CD4-positive, alpha-beta memory T cell (primary cell): ENCODE measurements at regions of chr17 and their contacts with region 1.

Region 1: DNA sequence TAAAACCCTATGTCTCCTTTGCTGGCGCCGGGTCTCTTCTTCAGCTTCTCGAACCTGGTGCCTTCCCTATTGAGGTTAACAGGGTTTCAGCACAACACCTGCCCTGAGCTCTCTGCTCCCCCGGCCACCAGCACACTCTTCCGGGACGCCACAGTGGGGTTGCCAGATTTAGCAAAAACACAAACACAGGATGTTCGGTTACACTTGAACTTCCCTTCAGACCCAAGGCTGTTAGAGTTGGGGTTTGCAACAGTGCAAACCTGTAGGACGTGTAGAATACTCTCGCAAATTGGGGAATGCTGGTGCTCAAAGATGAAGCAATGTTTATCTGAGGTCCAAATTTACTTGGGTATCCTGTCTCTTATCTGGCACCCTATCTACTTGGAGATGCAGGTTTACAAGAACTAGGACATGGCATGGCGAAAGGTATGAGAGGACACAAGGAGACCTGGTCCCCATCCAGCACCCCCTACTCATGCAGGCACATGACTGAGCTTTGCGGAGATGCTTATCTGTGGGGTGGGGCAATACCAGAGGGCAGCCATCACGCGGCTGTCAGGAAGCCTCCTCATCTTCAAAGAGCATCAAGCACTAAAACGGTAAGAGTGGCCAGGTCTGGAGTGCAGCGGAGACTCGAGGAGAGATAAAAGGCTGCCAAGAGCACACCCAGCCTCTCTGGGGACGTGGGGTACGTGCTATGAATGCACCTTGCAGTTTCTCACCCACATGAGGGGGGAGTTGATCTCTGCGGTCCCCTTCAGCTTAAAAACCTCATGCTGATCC is 52.8 kb downstream of the SDK2 start:
- DNase-seq: peak; percentile 56 to 76 (median 71)
- H3K4me3 ChIP-seq: peak overlapping the region in 1 of 2 donors; percentile 47
- H3K4me3 Mint-ChIP-seq: peak overlapping the region; percentile 77 to 87 (median 82)
- H3K27ac ChIP-seq: peak overlapping the region; percentile 27
- H3K27ac Mint-ChIP-seq: peak overlapping the region; percentile 88 to 95 (median 92)
- H3K4me1 ChIP-seq: peaks cover 63% of the 10 kb centered on the region
- H3K4me1 Mint-ChIP-seq: peaks cover 48 to 90% (median 62%) of the 10 kb centered on the region in 4 donors
- H3K27me3 ChIP-seq: no peaks in the 10 kb centered on the region
- H3K27me3 Mint-ChIP-seq: no peaks in the 10 kb centered on the region

Region 2: DNA sequence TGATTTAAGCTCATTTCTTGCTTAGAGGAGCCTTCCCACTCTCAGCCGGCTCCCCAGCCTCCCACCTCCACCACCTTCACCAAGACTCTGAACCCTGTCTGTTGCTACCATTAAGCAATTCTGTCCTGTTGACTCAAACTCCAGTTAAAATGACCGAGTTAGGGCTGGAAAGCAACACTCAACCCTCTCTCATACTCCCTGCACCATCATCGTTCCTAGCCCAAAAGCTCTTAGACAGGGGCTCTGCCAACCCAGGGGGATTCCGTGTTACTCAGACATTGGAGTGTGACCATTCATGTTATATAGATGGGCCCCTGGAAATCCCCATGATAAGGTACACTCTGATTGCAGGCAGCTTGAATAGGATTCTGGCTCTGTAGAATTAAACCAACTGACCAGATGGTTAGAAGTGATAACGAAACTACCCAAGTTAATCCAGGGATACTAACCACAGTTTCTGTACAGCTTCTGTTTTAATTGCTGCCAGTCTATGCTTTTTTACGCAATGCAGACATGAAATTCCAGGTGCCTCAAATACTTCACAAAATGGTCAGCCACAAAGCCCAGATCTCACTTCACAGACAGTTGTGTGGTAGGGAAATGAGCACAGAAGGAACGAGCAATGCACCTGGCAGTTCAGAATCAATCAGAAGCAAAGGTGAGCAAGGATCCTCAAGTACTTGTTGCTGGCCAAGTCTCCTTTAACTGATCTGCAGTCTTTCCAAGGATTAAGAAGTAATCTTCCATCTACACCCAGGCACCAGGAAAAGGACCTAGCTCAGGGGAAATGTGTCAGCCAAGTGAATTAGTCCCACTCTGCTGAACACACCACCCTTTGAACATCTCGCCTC is 424.5 kb before region 1 on chr17:
- CTCF ChIA-PET with region 1: no interaction called
- POLR2A ChIA-PET with region 1: no interaction called
- intact Hi-C with region 1: no loop called
- DNase-seq: no peak
- H3K4me3 ChIP-seq: no peak overlapping the region
- H3K4me3 Mint-ChIP-seq: peak overlapping the region; percentile 43 to 87 (median 74)
- H3K27ac ChIP-seq: no peak overlapping the region
- H3K27ac Mint-ChIP-seq: no peak overlapping the region
- H3K4me1 ChIP-seq: peaks cover 28% of the 10 kb centered on the region
- H3K4me1 Mint-ChIP-seq: peaks cover 14 to 42% (median 29%) of the 10 kb centered on the region in 4 donors
- H3K27me3 ChIP-seq: peaks cover 22% of the 10 kb centered on the region
- H3K27me3 Mint-ChIP-seq: peaks cover 43 to 54% of the 10 kb centered on the region in 2 donors

Region 3: DNA sequence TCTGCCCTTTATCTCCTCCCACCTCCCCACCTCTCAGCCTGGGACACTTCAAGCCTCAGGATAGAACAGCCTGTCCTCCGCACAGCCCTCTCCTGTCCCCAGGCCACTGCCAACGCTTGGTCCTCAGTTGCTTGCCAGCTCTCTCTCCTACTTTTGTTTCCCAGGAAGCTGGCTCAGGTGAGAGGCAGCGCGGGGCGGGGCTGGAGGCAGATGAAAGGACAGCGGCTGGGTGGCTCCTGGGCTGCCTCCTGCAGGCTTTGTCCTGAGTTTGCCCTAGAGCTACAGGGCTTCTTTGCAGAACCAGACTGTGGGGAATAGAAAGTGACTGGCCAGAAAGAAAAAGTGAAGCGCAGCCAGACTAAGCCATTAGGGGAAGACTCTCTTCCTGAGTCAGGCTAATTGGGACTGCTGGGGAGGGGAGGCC is 231.5 kb before region 1 on chr17:
- CTCF ChIA-PET with region 1: no interaction called
- POLR2A ChIA-PET with region 1: no interaction called
- intact Hi-C with region 1: no loop called
- DNase-seq: no peak
- H3K4me3 ChIP-seq: no peak overlapping the region
- H3K4me3 Mint-ChIP-seq: no peak overlapping the region
- H3K27ac ChIP-seq: no peak overlapping the region
- H3K27ac Mint-ChIP-seq: no peak overlapping the region
- H3K4me1 ChIP-seq: no peaks in the 10 kb centered on the region
- H3K4me1 Mint-ChIP-seq: no peaks in the 10 kb centered on the region
- H3K27me3 ChIP-seq: no peaks in the 10 kb centered on the region
- H3K27me3 Mint-ChIP-seq: no peaks in the 10 kb centered on the region

Region 4: DNA sequence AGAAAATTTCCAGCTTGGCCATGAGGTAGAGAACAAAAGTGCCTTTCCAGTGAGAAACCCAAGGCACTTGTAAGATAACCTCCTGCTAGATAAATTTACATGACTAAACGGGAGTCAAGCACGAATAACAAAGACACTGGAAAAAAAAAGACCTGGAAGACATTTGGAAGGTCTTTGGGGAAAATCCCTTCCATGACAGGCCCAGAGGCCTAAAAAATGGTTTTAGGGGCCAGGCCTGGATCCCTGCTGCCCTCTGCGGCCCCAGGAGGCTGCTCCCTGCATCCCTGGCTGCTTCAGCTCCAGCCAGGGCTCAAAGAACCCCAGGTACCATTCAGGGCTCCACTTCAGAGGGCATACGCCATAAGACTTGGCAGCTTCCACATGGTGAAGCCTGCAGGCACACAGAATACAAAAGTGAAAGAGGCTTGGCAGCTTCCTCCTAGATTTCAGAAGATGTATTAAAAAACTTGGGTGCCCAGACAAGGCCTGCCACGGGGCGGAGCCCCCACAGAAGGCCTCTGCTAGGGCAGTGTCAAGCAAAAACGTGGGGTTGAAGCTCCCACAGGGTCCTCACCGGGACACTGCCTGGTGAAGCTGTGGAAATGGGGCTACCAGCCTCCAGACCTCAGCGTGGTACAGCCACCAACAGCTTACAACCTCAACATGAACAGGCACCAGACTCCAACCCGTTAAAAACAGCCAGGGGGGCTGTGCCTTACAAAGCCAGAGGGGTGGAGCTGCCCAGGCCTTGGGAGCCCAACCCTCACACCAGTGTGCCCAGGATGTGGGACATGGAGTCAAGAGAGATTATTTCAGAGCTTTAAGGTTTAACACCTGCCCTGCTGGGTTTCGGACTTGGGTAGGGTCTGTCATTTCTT is 24.3 kb before region 1 on chr17:
- CTCF ChIA-PET with region 1: interaction called, 4 read pairs
- POLR2A ChIA-PET with region 1: interaction called, 25 read pairs
- intact Hi-C with region 1: no loop called
- DNase-seq: peak in 4 of 5 donors; percentile 11 to 26 (median 20)
- H3K4me3 ChIP-seq: no peak overlapping the region
- H3K4me3 Mint-ChIP-seq: peak overlapping the region in 3 of 8 donors; percentile 4 to 58 (median 20)
- H3K27ac ChIP-seq: no peak overlapping the region
- H3K27ac Mint-ChIP-seq: peak overlapping the region in 6 of 7 donors; percentile 53 to 88 (median 66)
- H3K4me1 ChIP-seq: peaks cover 11% of the 10 kb centered on the region
- H3K4me1 Mint-ChIP-seq: peaks cover 6 to 17% (median 14%) of the 10 kb centered on the region in 4 donors
- H3K27me3 ChIP-seq: no peaks in the 10 kb centered on the region
- H3K27me3 Mint-ChIP-seq: no peaks in the 10 kb centered on the region

Region 5: DNA sequence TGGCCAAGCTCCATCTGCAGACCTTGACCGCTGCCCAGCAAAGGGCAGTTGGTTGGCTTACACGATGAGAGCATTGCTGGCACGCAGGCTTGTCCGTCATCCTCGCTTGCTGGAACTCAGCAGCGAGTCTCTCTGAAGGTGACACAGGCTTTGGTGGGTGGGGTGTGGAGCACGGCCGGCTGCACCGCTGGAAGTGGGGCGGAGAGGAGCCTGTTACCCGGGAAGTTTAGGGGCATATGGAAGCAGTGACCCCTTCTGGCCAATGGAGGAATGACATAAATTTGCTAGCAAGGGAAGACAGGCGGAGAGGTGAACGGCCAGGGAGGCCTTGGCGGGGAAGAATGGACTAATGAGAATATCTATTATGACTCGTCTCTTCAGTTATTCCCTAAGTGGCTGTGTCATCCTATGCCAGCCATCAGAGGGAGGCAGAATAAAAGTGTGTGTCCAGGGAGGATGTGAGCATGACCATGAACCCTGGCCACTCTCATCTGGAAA is 118.7 kb after region 1 on chr17:
- CTCF ChIA-PET with region 1: interaction called, 22 read pairs
- POLR2A ChIA-PET with region 1: no interaction called
- intact Hi-C with region 1: no loop called
- DNase-seq: peak in 4 of 5 donors; percentile 56 to 66 (median 62)
- H3K4me3 ChIP-seq: no peak overlapping the region
- H3K4me3 Mint-ChIP-seq: no peak overlapping the region
- H3K27ac ChIP-seq: no peak overlapping the region
- H3K27ac Mint-ChIP-seq: peak overlapping the region in 1 of 7 donors; percentile 66
- H3K4me1 ChIP-seq: peaks cover 4% of the 10 kb centered on the region
- H3K4me1 Mint-ChIP-seq: peaks cover 7 to 11% (median 8%) of the 10 kb centered on the region in 4 donors
- H3K27me3 ChIP-seq: no peaks in the 10 kb centered on the region
- H3K27me3 Mint-ChIP-seq: peaks cover 6% of the 10 kb centered on the region in 2 donors